ENCODE measurements at regions of chr10 and their contacts with region 1.

Region 1: DNA sequence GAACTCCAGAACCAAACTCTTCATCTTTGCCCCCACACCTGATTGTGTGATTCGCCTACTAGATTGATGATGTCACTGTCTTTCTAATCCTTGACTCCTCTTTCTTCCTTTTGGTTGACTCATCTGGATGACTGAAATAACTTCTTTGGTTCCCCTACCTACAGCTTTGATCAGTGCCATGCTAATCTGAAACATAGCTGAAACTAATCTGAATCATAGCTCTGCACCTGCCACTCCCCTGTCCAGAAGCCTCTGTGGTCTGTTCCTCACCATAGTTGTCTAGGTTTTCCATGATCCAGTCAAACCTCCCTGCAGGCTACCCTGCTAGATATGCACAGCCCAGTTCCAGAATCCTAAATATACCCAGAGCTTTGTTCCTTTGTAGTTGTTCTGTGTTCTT is 51.9 kb downstream of the ZNF365 start:
- DNase-seq: peak; percentile 64
- H3K4me3 Mint-ChIP-seq: no peak overlapping the region
- H3K27ac Mint-ChIP-seq: peak overlapping the region; percentile 12
- H3K4me1 Mint-ChIP-seq: peaks cover 28% of the 10 kb centered on the region
- H3K27me3 Mint-ChIP-seq: no peaks in the 10 kb centered on the region

Region 2: GRCh38 chr10:61882621-61883373 is 543.3 kb before region 1 on chr10:
- CTCF ChIA-PET with region 1: no interaction called
- intact Hi-C with region 1: loop called (anchors 1 kb)
- DNase-seq: peak; percentile 88
- H3K4me3 Mint-ChIP-seq: no peak overlapping the region
- H3K27ac Mint-ChIP-seq: peak overlapping the region; percentile 83
- H3K4me1 Mint-ChIP-seq: peaks cover 30% of the 10 kb centered on the region
- H3K27me3 Mint-ChIP-seq: no peaks in the 10 kb centered on the region

Region 3: DNA sequence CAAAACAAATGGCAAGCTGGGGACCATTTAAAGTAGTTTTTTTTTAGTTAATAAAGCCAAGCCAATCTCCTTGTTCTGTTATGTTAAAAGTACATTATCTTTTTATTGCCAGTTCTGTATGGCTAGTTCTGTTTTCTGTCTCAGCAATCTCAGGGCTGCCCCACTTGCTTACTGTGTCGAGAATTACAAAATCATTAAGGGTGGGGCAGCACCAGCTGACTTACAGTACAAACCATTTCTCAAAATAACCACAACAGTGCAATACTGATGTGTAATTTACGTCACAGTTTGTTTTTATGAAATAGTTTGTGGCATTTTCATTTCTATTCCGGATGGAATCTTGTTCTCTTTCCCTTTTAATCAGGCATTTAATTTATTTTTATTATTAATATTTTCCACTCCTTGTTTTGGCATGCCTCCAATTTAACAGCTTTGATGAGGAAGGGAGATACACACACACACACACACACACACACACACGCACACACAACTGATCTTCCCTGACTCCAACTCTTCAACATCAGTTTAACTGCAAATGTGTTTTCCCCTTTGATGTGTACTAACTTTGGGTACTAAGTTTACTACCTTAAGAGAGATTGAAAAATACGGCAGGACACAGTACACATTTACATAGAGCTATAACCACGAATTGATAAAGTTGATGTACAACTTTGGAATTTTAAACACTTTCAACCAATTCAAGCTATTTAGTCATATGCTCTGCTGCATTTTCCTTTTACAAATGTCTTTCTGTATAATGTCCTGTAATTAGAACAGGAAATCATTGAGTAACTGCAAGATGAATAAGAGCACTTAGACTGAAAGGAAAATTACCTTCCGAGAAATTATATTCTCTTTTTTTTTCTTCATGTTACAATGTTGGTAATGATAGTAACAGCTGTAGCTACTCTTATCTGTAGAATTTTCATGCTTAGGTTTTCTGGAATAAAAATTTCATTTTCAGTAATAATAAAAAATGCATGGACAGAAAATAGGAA is 433.1 kb before region 1 on chr10:
- CTCF ChIA-PET with region 1: no interaction called
- intact Hi-C with region 1: loop called (anchors 1 kb)
- DNase-seq: peak; percentile 84
- H3K4me3 Mint-ChIP-seq: peak overlapping the region; percentile 47
- H3K27ac Mint-ChIP-seq: peak overlapping the region; percentile 96
- H3K4me1 Mint-ChIP-seq: peaks cover 85% of the 10 kb centered on the region
- H3K27me3 Mint-ChIP-seq: no peaks in the 10 kb centered on the region

Region 4: DNA sequence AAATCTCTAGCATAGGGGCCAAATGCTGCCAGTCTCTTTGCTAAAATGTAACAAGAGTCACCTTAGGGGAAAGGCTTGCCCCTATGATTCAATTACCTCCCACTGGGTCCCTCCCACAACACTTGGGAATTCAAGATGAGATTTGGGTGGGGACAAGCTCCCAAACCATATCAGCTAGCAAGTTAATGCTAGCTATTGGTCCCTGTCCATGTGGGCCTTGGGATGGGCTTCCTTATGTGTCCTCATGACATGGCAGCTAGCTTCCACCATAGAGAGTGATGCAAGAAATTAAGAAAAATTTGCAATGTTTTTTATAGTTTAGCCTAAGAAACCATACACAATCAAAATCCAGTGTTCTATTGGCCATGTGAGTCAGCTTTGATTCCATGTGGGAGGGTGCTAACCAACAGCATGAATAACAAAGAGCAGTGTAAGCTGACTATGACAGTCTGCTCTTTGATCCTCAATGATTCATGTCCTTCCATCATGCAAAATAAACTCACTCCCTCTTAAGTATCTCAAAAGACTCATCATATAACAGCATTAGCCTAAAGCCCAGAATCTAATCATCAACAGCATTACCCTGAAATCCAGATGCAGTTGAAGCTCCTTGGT is 73.6 kb before region 1 on chr10:
- CTCF ChIA-PET with region 1: no interaction called
- intact Hi-C with region 1: loop called (anchors 1 kb)
- DNase-seq: peak; percentile 46
- H3K4me3 Mint-ChIP-seq: no peak overlapping the region
- H3K27ac Mint-ChIP-seq: no peak overlapping the region
- H3K4me1 Mint-ChIP-seq: peaks cover 19% of the 10 kb centered on the region
- H3K27me3 Mint-ChIP-seq: peaks cover 6% of the 10 kb centered on the region

Region 5: GRCh38 chr10:62980687-62981086 is 554.6 kb after region 1 on chr10:
- CTCF ChIA-PET with region 1: no interaction called
- intact Hi-C with region 1: loop called (anchors 1 kb)
- DNase-seq: peak; percentile 52
- H3K4me3 Mint-ChIP-seq: no peak overlapping the region
- H3K27ac Mint-ChIP-seq: peak overlapping the region; percentile 76
- H3K4me1 Mint-ChIP-seq: peaks cover 23% of the 10 kb centered on the region
- H3K27me3 Mint-ChIP-seq: peaks cover 8% of the 10 kb centered on the region